Right ventricle myocardium inferior (tissue), 1 donor: ENCODE measurements at regions of chr3 and their contacts with region 1.

Region 1: DNA sequence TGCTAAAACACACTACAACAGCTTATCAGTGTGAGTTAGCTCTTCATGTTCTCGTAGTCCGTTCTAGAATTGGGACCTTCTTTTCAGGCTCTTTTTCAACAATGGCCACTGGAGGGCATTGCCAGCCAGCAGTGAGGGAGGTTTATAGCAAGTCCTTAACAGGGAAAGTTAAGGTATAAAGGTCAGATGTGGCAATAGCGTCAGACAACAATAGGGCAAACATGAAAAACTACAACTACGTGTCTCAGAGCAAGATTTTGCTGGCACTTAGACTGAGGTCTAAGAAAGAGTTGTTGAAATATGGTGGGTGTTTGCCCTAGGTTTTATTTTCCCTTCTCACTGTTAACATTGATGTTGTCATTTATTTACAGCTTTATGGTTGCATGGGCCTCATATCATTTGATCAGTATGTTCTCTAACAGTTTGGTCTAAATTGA is 161.4 kb downstream of the GMNC start:
- DNase-seq: no peak
- ATAC-seq: peak; percentile 72

Region 2: GRCh38 chr3:189961525-189962161 is 739.5 kb before region 1 on chr3:
- intact Hi-C with region 1: loop called (anchors 5 kb)
- DNase-seq: no peak
- ATAC-seq: peak; percentile 57

Region 3: DNA sequence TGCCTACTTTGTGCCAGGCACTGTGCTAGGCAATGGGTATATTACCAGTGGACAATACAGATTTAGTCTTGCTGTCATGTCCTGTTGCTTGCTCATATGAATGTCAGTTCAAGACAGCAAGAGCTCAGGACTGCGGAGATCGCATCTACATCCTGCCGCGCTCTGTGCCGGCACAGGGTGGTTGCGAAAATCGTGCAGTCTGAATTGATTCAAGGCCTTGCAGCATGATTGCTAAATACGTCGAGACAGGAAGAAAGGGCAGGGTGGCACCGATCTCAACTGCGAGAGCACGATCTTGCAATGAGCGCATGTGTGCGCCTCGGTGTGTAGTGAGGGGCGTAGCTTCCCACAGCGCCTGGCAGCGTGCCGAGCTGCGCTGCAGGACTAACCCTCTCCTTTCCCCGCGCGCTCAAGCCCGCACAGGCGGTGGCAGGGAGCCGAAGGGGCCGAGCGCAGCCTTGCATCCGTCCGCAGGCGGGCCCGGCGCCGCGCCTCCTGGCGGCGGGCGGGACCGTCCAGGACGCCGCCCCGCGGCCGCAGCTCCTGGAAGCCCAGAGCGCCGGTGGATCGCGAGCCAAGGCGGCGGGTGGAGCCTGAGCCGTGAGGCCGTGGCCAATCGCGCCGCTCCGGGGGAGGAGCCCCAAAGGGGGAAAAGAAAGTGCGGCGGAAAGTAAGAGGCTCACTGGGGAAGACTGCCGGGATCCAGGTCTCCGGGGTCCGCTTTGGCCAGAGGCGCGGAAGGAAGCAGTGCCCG is 187.5 kb before region 1 on chr3 and contains the start of gene IL1RAP:
- intact Hi-C with region 1: loop called (anchors 5 kb)
- DNase-seq: peak; percentile 96
- ATAC-seq: peak; percentile 97
- total RNA-seq, gene IL1RAP: 6.8 TPM

Region 4: GRCh38 chr3:190826018-190826417 is 124.9 kb after region 1 on chr3:
- intact Hi-C with region 1: no loop called
- DNase-seq: no peak
- ATAC-seq: peak; percentile 28

Region 5: DNA sequence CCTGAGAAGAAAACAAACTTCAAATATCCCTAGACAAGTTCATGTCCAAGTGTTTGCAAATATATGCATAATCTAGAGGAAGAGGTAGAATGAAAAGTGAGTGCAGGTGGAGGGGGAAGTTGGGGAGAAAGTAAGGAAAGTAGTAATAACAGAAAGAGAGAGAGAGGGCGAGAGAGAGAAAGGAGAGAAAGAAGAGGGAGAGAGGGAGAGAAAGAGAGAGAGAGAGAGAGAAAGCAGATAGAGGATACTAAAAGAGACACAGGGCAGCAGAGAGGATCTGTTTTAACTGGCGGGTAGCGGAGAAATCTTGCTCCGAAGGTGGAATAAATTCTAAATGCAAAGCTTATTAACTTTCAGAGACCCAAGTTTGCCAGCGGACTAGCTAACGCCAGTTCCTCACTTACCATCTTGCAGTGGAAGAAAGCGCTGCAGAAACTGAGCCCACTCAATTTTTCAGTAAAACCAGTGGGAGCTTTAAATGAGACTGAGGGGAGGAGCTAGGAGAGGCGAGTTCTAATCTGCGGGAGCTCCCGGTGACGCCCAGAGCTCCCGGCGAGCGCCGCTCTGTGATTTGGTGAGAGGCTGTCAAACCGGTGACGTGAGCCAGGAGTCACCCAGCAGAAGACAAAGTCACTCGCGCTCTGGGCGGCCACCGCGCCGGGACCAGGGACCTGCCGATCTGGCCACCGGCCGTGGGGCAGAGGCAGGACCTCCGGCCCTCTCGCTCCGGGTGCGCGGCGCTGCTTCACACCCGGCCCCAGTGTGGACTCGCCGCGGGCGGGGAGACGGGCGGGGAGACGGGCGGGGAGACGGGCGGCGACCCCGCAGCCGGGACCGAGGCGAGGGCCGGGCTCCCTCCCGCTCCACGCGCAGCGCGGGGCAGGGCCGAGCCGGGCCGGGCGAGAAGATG is 161.3 kb after region 1 on chr3 and contains the start of gene GMNC:
- intact Hi-C with region 1: loop called (anchors 1 kb)
- DNase-seq: peak; percentile 92
- ATAC-seq: peak; percentile 96
- total RNA-seq, gene GMNC: 4.4 TPM

Region 6: DNA sequence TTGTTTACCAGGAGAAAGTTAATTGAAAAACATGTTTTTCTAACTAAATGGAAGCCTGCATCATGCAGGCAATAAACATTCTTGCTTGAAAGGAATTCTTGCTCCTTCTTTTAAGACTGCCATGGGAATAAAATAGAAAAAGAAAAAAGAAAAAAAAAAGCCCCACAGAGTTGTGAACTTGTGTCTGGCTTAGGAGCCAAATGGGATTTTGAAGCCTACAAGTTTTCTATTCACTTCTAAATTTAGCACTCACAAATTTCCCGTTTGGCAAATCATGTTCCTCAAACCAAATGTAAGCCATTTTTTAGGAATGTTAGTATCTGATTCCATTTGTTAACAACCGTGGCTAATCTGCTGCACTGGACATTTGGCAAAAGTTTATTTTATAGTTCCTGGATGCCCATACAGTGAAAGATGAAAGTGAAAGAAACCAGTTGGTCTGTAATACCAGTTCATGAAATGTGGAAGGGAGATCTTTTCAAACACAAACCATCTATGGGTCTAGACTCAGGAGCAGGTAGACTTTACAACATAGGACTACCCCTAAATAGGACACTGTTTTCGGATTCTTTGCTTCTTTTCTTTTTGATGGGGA is 295.2 kb after region 1 on chr3:
- intact Hi-C with region 1: no loop called
- DNase-seq: no peak
- ATAC-seq: no peak

Region 7: DNA sequence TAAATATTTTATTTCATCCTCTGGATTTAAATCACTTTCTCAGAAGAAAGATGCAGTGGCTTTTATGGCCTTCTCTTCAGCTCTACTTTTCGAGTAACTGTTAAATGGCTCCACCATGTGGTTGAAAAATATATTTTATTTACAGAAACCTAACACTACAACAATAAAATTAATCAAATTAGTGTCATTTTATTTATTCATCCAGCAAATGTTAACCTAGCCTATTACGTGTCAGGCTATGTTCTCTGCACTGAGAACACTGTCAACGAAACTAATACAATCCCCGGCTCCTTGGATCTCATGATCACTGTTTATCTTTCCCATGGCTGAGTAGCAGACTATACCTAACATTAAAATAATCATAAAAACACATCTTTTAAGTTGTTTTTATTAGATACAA is 349.9 kb after region 1 on chr3:
- intact Hi-C with region 1: loop called (anchors 2 kb)
- DNase-seq: no peak
- ATAC-seq: no peak